ENCODE measurements at regions of chr10 and their contacts with region 1.

Region 1: DNA sequence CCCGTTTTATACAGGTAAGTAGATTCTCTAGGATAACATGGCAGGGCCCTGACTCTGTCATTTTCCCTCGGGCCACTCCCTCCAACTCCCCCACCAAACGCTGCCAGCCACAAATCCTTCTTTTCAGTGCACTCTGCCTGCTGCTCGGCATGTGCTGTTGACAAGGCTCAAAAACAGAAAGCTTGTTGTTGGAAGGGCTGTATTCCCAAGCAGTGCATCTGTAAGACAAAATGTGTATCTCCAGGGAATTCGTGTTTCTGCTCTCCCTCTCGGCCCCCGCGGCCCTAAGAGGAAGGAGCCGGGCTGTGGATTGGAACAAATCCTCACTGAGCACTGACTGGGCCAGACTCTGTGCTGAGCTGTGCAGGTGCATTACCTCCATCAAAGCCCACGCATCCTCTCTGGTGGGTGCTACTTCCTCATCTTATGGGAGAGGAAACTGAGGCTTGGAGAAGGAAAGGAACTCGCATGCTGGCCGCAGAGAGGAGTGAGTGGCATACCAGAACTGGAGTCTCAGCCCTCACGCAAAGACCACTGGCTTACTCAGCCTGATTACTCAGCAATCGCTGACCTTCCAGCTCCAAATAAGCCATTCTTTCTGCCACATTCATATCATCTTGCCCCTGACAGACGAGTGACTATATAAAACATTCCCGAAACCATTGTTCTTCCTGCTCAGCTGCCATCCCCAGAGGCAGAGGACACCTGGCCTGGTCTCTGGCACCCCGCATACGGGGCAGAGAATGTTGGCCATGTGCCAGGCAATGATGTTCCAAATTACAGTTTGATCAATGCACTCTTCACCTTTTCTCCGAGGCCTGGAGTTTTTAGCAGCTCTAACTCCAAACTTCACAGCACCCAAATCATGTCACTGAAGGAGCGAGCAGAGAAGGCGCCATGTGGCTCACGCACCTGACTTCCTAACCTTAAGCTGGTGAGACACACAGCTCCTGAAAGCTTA is 33.4 kb upstream of the ENO4 start:
- DNase-seq: no peak
- H3K4me3 ChIP-seq: no peak overlapping the region
- H3K27ac ChIP-seq: no peak overlapping the region
- H3K4me1 ChIP-seq: peaks cover 0 to 4% (median under 1%) of the 10 kb centered on the region in 4 experiments; a peak in 2 of 7 replicates
- H3K27me3 ChIP-seq: no peaks in the 10 kb centered on the region
- CTCF ChIP-seq: no peak
- EP300 ChIP-seq: no peak
- POLR2A ChIP-seq: no peak
- RAD21 ChIP-seq: no peak

Region 2: DNA sequence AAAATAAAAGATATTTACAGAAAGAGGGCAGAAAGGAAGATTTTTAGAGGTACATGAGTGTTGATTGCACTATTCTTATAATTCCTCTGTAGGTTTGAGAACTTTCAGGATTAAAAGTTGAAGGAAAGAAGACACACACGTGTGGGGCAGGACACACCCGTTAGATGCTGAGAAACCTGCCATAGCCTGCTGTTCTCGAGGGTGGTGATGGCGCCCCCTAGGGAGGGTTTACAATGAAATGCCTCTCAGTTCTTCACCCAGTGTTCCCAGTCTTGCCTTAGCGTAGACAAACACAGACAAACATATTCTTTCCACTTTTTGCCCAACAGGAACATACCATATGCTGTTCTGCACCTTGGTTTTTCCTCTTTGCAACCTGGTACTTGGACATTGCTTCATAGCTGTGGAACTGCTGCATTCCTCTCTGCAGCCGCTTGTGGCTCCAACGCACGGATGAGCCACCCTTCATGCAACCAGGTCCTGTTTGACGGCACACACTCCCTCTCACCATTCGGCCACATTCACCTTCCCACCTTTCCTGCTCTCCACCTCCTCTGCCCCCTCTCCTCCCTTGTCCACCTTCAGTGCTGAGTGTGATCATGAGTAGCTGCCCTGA is 50.3 kb before region 1 on chr10:
- CTCF ChIA-PET with region 1: no interaction called
- POLR2A ChIA-PET with region 1: no interaction called
- DNase-seq: peak in 1 of 2 experiments; percentile 78
- H3K4me3 ChIP-seq: no peak overlapping the region
- H3K27ac ChIP-seq: no peak overlapping the region
- H3K4me1 ChIP-seq: peaks cover 0 to 7% (median 0%) of the 10 kb centered on the region in 4 experiments; a peak in 2 of 7 replicates
- H3K27me3 ChIP-seq: no peaks in the 10 kb centered on the region; a peak in 1 of 7 replicates
- CTCF ChIP-seq: peak; percentile 71 to 78 (median 74)
- EP300 ChIP-seq: no peak
- POLR2A ChIP-seq: no peak
- RAD21 ChIP-seq: peak; percentile 66 to 69

Region 3: GRCh38 chr10:116826803-116827202 is 10.9 kb after region 1 on chr10:
- CTCF ChIA-PET with region 1: interaction called, 23 read pairs
- POLR2A ChIA-PET with region 1: interaction called, 3 read pairs
- DNase-seq: no peak
- H3K4me3 ChIP-seq: no peak overlapping the region
- H3K27ac ChIP-seq: no peak overlapping the region
- H3K4me1 ChIP-seq: peaks cover 0 to 8% (median 4%) of the 10 kb centered on the region in 4 experiments; a peak in 4 of 7 replicates
- H3K27me3 ChIP-seq: no peaks in the 10 kb centered on the region
- CTCF ChIP-seq: no peak
- EP300 ChIP-seq: no peak
- POLR2A ChIP-seq: no peak
- RAD21 ChIP-seq: no peak

Measured in H1 (cell line).